ENCODE measurements at regions of chr1 and their contacts with region 1.

Region 1: GRCh38 chr1:113963281-113963906 is 15.9 kb upstream of the OLFML3 start:
- DNase-seq: no peak
- CTCF ChIP-seq: no peak

Region 2: DNA sequence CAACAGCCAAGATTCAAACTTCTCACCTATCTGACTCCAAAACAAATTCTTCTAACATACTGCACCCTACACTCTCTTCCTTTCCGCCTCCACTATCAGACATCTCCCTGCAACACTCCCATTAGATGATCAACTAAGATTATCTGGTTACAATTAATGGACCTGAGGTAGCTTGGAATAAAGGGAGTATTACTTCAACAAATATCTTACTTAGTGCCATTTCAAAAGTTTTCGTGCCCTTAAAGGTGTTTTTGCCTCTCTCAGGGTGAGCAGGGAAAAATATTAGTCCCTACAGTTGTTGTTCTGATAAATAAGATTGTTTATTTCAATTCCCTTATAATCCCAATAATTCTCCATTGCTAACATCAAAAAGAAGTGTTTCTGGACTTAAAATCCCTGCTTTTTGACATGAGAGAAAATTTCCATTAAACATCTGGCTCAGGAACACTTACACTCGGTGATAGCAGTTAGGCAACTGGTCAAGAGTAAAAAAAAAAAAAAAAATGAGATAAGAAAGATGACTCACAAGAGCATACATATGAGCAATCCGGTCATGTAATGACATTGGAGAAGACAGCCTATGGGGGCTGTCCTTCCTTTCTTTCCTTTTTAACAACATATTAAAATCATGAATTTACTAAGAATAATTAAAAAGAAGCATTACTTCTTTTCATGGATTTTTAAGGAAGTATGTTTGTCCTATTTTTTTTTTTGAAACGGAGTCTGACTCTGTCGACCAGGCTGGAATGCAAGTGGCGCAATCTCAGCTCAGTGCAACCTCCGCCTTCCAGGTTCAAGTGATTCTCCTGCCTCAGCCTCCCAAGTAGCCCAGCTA is 158.8 kb before region 1 on chr1:
- CTCF ChIA-PET with region 1: no interaction called
- POLR2A ChIA-PET with region 1: no interaction called
- DNase-seq: no peak
- CTCF ChIP-seq: no peak

Region 3: DNA sequence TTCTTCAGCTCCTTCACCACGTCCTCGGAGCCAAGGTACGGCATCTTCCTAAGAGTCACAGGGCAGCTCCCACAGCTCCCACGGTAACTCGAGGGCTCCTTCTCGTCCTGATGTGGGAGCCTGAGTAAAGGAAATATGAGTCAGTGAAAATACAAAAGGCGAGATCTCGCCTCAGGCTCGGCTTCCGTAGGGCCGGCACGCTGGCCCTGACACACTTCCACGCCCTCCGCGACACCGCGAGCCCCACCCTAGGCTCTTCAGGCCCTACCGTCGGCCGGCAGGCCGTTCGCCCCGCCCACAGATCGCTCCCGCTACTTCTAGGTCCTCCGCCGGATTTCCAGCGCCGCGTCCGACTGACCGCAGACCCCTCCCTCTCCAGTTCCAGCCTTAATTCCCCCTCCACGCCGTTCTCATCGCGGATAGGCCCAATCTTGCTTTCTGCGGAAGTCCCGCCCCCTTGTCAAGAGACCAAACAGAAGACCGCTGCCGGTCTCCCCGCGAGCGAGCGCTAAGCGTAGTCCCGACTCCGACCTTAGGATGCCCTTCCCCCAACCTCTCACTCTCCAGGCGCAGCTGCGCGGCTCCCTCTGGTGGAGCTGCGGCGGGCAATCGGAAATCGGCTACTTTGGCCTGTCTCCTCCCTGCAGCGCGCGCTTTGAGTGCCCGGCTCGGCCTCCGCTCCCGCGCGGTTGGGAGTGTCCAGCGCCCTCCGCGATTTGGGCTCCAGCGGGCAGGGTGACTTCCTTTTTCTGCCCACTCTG is 58.5 kb before region 1 on chr1 and contains the starts of genes AP4B1 and DCLRE1B:
- CTCF ChIA-PET with region 1: no interaction called
- POLR2A ChIA-PET with region 1: no interaction called
- DNase-seq: peak; percentile 97
- CTCF ChIP-seq: peak; percentile 89

Region 4: DNA sequence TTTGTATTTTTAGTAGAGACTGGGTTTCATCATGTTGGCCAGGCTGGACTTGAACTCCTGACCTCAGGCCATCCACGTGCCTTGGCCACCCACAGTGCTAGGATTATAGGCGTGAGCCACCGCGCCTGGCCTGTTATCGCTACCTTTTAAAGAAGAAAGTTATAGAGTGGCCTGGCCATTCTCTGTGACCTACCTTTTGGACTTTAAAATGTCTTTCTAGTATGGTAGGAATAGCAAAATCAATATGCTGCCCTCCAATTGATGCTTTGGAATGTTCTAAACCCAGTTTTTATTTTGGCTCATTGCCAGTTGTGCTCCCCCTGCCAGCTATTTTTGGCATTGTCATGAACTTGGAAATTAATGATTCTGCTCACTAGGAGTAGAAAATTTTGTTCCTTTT is 14.4 kb before region 1 on chr1:
- CTCF ChIA-PET with region 1: interaction called, 13 read pairs
- POLR2A ChIA-PET with region 1: no interaction called
- DNase-seq: no peak
- CTCF ChIP-seq: no peak

Region 5: GRCh38 chr1:113978863-113979702 is 15.7 kb after region 1 on chr1 and contains the start of gene OLFML3:
- CTCF ChIA-PET with region 1: interaction called, 13 read pairs
- POLR2A ChIA-PET with region 1: no interaction called
- DNase-seq: peak; percentile 69
- CTCF ChIP-seq: peak; percentile 84

Measured in GM10248 (cell line).